ENCODE measurements at regions of chr12 and their contacts with region 1.

Region 1: GRCh38 chr12:55715833-55716581 is at the start of gene BLOC1S1:
- DNase-seq: peak; percentile 95 to 98
- ATAC-seq: peak; percentile 78 to 88
- H3K4me3 ChIP-seq: peak within 1 kb of the TSS; percentile 86
- H3K27ac ChIP-seq: peak within 1 kb of the TSS; percentile 96 to 97
- H3K4me1 ChIP-seq: peaks cover 47% of the 10 kb centered on the region
- CTCF ChIP-seq: no peak
- EP300 ChIP-seq: no peak
- POLR2A ChIP-seq: peak; percentile 37; the same call in 1 of the 2 replicates
- RAD21 ChIP-seq: no peak
- polyA plus RNA-seq, gene BLOC1S1: 112 and 115 TPM in 2 replicates

Region 2: GRCh38 chr12:55659486-55660385 is 56.3 kb before region 1 on chr12:
- CTCF ChIA-PET with region 1: interaction called, 43 read pairs
- POLR2A ChIA-PET with region 1: no interaction called
- DNase-seq: peak in 1 of 2 experiments; percentile 47
- ATAC-seq: peak; percentile 58 to 85; a peak in 4 of 6 replicates
- H3K4me3 ChIP-seq: no peak overlapping the region
- H3K27ac ChIP-seq: no peak overlapping the region
- H3K4me1 ChIP-seq: no peaks in the 10 kb centered on the region
- CTCF ChIP-seq: peak; percentile 72
- EP300 ChIP-seq: no peak
- POLR2A ChIP-seq: no peak
- RAD21 ChIP-seq: peak; percentile 77 to 86

Region 3: DNA sequence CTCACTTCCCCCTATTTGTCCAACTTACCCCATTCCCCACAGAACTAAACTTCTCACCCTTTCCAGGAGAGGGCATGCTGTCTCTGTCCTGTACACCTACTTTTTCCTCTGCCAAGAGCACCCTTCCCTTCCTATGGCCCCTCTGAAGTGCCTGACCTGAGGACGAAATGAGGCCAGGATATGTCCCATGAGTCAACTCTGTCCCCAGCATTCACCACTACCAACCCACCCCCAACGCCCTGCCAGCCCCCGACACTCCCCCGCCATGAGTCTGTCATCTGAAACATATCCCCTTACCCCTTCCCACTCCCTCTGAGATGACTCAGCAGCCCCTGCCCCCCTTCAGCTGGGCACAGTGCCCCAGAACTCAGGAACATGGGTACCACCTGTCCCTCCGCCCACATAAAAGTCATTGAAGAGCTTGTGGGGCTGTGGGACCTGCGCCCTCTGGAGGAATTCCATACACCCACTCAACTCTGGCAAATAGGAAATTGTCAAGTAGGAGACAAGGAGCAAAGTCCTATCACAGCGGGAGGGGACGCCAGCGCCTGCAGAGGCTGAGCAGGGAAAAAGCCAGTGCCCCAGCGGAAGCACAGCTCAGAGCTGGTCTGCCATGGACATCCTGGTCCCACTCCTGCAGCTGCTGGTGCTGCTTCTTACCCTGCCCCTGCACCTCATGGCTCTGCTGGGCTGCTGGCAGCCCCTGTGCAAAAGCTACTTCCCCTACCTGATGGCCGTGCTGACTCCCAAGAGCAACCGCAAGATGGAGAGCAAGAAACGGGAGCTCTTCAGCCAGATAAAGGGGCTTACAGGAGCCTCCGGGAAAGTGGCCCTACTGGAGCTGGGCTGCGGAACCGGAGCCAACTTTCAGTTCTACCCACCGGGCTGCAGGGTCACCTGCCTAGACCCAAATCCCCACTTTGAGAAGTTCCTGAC is 34.6 kb before region 1 on chr12:
- CTCF ChIA-PET with region 1: interaction called, 59 read pairs
- POLR2A ChIA-PET with region 1: interaction called, 11 read pairs
- DNase-seq: peak; percentile 90 to 92
- ATAC-seq: peak; percentile 93 to 96
- H3K4me3 ChIP-seq: peak overlapping the region; percentile 52
- H3K27ac ChIP-seq: peak overlapping the region; percentile 66 to 87
- H3K4me1 ChIP-seq: peaks cover 14% of the 10 kb centered on the region; the same call in 2 of the 3 replicates
- CTCF ChIP-seq: peak; percentile 71
- EP300 ChIP-seq: no peak
- POLR2A ChIP-seq: peak; percentile 86
- RAD21 ChIP-seq: peak in 1 of 2 experiments; percentile 47; a peak in 3 of 5 replicates

Region 4: GRCh38 chr12:55692631-55693322 is 23.2 kb before region 1 on chr12:
- CTCF ChIA-PET with region 1: interaction called, 10 read pairs
- POLR2A ChIA-PET with region 1: no interaction called
- DNase-seq: no peak
- ATAC-seq: no peak
- H3K4me3 ChIP-seq: no peak overlapping the region
- H3K27ac ChIP-seq: no peak overlapping the region
- H3K4me1 ChIP-seq: no peaks in the 10 kb centered on the region
- CTCF ChIP-seq: no peak
- EP300 ChIP-seq: no peak
- POLR2A ChIP-seq: no peak
- RAD21 ChIP-seq: no peak

Region 5: DNA sequence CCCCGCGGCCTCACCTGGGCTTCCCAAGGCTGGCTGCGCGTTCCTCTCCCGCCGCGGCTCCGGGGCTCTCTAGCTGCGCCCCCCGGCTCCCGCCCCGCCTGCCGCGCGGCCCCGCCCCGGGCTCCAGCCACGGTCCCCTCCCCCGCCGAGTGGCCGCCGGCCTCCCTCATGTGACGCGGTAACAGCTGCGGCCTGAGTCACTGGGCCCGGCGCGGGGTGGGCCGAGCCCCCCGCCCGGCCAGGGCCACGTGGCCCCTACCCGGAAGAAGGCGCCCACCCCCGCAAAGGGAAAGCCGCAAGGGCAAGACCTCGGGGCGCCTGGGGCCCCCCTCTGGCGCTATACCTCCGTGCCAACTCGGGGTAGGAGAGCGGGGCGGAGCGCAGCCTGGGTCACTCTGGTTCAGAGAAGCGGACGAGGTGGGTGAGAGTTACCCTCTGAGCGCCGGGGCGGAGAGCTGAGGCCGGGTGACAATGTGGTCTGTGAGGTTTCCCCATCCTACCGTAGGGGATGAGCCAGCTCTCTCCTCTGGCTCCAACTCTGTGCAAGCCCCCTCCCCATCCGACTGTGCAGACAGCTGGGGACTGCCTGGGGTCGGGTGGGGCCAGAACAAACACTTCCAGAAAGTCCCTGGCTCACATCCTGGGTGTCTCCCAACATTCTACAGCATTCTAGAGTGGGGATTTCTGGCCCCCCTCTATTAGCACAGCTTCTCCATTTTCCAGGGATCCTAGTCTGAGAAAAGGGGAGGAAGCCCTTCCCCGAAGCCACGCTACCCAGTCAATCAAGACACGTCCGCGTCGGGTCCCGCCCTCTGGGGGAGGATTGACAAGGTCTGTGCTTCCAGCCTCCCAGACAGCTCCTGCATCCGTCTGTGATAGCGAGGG is 13.2 kb after region 1 on chr12 and contains the start of gene CD63:
- CTCF ChIA-PET with region 1: interaction called, 139 read pairs
- POLR2A ChIA-PET with region 1: interaction called, 7 read pairs
- DNase-seq: peak; percentile 91 to 98
- ATAC-seq: peak; percentile 78 to 87
- H3K4me3 ChIP-seq: peak within 1 kb of the TSS; percentile 76
- H3K27ac ChIP-seq: peak within 1 kb of the TSS; percentile 97
- H3K4me1 ChIP-seq: peaks cover 34% of the 10 kb centered on the region
- CTCF ChIP-seq: no peak
- EP300 ChIP-seq: peak in 1 of 2 experiments; percentile 26; a peak in 1 of 5 replicates
- POLR2A ChIP-seq: peak; percentile 46
- RAD21 ChIP-seq: no peak
- polyA plus RNA-seq, gene CD63: 512 and 724 TPM in 2 replicates

Region 6: DNA sequence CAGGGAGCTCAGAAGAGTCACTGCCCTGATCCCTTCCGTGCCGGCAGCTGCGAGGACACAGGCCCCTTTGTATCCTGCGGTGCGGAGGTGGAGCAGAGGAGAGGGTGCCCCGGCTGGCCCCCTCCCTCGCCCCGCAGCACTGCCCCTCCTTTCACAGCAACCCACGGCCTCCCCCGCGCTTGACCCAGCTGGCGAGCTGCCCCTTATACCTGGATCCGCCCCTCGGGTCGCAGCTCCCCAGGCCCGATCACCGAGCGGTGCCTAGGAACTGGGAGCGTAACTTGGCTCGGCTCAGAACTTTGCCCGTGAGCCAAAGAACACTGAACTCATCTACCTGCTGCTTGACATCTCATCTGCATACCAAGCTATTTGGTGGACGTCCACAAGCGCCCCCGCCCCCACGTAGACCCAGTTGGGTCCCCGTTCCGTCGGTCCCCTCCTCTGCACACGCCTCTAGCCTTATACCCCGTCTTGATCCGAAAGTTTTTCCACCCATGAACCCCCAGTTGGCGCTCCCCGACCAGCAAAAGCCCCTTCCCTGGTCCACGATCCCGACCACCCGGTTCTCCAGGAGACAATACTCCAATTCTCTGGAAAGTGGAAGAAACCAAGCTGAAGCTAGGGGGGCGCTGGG is 114.1 kb after region 1 on chr12:
- CTCF ChIA-PET with region 1: no interaction called
- POLR2A ChIA-PET with region 1: interaction called, 10 read pairs
- DNase-seq: peak; percentile 23 to 28
- ATAC-seq: peak; percentile 65 to 74
- H3K4me3 ChIP-seq: peak overlapping the region; percentile 80
- H3K27ac ChIP-seq: peak overlapping the region; percentile 89 to 91
- H3K4me1 ChIP-seq: peaks cover 28% of the 10 kb centered on the region; the same call in 2 of the 3 replicates
- CTCF ChIP-seq: no peak
- EP300 ChIP-seq: no peak
- POLR2A ChIP-seq: peak; percentile 22; the same call in 1 of the 2 replicates
- RAD21 ChIP-seq: no peak; a peak in 1 of 5 replicates

Measured in A549 (cell line).